B cell (primary cell): ENCODE measurements at regions of chr22 and their contacts with region 1.

Region 1: DNA sequence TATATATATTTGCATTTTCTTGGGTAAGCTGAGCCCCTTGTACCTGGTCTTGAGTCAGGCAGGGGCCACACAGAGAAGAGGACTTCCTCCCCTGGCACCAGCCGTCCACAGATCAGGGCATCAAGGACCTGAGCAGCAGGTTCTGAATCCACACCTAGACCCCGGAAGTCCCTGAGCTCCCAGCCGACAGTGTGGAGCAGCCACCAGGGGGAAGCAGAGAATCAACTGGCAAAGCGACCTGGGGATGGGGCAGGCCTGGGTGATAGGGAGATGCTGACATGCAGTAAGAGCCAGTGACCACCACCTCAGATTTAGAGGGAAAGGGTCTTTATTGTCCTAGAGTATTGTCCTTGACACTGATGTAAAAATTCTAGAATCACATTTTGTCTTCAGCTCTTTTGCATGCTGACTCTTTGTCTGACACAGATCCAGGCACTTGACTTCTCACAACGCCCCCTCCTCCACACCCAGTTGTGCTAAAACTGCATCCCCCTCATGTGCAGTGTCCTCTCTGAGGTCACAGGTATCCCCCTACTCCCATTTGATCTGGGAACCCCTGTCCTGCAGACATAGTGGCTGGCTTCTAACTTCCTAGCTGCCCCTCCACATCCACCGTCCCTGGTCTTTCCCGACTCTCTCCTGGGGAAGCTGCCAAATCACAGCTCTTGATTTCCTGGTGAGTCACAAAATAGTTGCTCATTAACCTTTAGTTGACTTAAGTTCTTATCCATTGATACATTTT is 109.3 kb downstream of the GGTLC2 start:
- DNase-seq: peak; percentile 79
- ATAC-seq: peak; percentile 86
- H3K4me3 ChIP-seq: no peak overlapping the region
- H3K4me3 Mint-ChIP-seq: no peak overlapping the region
- H3K27ac ChIP-seq: peak overlapping the region in 1 of 2 donors; percentile 12
- H3K27ac Mint-ChIP-seq: peak overlapping the region; percentile 72
- H3K4me1 ChIP-seq: peaks cover 14 to 17% of the 10 kb centered on the region in 2 donors
- H3K4me1 Mint-ChIP-seq: peaks cover 27% of the 10 kb centered on the region
- H3K27me3 ChIP-seq: no peaks in the 10 kb centered on the region
- H3K27me3 Mint-ChIP-seq: no peaks in the 10 kb centered on the region
- CTCF ChIP-seq: peak; percentile 74

Region 2: DNA sequence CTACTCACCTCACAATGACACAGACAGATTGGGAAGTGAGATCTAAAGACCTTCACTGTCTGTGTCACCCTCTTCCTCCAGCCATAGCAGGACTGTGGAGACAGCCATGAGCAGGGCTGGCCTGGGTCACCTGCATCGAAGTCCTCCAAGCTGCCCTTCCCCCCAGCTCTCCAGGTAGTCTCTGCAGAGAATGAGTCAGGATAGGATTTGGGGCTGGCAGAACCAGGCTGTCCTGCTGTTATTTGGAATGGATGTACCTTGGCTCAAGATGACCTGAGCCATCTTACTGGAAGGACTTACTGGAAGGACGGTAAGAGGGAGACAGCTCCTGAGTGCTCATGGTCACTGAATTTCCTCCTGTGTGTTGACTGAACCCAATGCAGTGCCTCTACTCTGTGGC is 80.1 kb before region 1 on chr22:
- CTCF ChIA-PET with region 1: no interaction called
- POLR2A ChIA-PET with region 1: no interaction called
- intact Hi-C with region 1: no loop called
- DNase-seq: no peak
- ATAC-seq: no peak
- H3K4me3 ChIP-seq: no peak overlapping the region
- H3K4me3 Mint-ChIP-seq: no peak overlapping the region
- H3K27ac ChIP-seq: no peak overlapping the region
- H3K27ac Mint-ChIP-seq: no peak overlapping the region
- H3K4me1 ChIP-seq: peaks cover under 1 to 2% of the 10 kb centered on the region in 2 donors
- H3K4me1 Mint-ChIP-seq: peaks cover 2% of the 10 kb centered on the region
- H3K27me3 ChIP-seq: no peaks in the 10 kb centered on the region
- H3K27me3 Mint-ChIP-seq: peaks cover 5% of the 10 kb centered on the region
- CTCF ChIP-seq: no peak

Region 3: DNA sequence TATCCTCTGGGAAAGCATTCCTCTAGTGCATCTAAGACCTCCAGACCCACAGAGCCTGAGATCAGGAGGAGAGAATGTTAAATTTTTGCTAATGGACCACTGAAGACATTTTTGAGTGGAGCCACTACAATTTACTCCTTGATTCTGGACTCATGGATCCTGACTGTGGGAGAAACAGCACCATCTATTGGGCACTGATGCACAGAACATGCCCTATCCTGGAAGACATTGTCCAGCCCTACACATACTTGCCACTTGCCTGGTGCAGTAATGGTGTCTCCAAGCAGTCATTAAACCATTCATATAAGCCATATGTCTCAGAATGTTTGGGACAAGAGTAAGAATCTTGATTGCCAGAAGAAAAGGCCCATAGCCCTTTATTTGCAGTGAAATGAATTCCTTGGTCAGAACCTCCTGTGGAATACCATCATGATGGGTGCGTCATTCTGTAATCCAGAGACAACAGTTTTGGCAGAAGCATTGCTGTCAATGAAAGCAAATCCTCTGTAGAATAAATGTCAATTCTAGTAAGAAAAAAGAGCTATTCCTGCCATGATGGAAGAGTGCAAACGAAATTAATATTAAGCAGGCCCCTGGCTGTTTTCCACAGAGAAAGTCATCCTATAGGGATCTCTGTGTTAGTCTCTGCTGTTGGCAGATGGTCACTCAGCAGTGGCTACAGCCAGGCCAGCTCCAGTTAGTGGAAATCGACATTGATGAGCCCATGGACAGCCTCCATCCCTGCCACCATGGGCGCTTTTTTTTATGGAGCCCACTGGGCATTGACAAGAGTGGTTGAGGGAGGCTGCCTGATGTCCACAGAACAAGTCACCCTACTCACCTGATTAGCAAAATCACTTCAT is 65.8 kb before region 1 on chr22:
- CTCF ChIA-PET with region 1: interaction called, 24 read pairs
- POLR2A ChIA-PET with region 1: interaction called, 4 read pairs
- intact Hi-C with region 1: no loop called
- DNase-seq: peak; percentile 36
- ATAC-seq: no peak
- H3K4me3 ChIP-seq: no peak overlapping the region
- H3K4me3 Mint-ChIP-seq: peak overlapping the region; percentile 78
- H3K27ac ChIP-seq: peak overlapping the region; percentile 11 to 52
- H3K27ac Mint-ChIP-seq: peak overlapping the region; percentile 81
- H3K4me1 ChIP-seq: peaks cover 46 to 56% of the 10 kb centered on the region in 2 donors
- H3K4me1 Mint-ChIP-seq: peaks cover 54% of the 10 kb centered on the region
- H3K27me3 ChIP-seq: no peaks in the 10 kb centered on the region
- H3K27me3 Mint-ChIP-seq: no peaks in the 10 kb centered on the region
- CTCF ChIP-seq: peak; percentile 47

Region 4: GRCh38 chr22:22702237-22703202 is 51.2 kb before region 1 on chr22:
- CTCF ChIA-PET with region 1: interaction called, 11 read pairs
- POLR2A ChIA-PET with region 1: no interaction called
- intact Hi-C with region 1: no loop called
- DNase-seq: peak; percentile 36
- ATAC-seq: no peak
- H3K4me3 ChIP-seq: no peak overlapping the region
- H3K4me3 Mint-ChIP-seq: no peak overlapping the region
- H3K27ac ChIP-seq: no peak overlapping the region
- H3K27ac Mint-ChIP-seq: no peak overlapping the region
- H3K4me1 ChIP-seq: peaks cover 11 to 17% of the 10 kb centered on the region in 2 donors
- H3K4me1 Mint-ChIP-seq: peaks cover 21% of the 10 kb centered on the region
- H3K27me3 ChIP-seq: no peaks in the 10 kb centered on the region
- H3K27me3 Mint-ChIP-seq: peaks cover 3% of the 10 kb centered on the region
- CTCF ChIP-seq: peak; percentile 30

Region 5: DNA sequence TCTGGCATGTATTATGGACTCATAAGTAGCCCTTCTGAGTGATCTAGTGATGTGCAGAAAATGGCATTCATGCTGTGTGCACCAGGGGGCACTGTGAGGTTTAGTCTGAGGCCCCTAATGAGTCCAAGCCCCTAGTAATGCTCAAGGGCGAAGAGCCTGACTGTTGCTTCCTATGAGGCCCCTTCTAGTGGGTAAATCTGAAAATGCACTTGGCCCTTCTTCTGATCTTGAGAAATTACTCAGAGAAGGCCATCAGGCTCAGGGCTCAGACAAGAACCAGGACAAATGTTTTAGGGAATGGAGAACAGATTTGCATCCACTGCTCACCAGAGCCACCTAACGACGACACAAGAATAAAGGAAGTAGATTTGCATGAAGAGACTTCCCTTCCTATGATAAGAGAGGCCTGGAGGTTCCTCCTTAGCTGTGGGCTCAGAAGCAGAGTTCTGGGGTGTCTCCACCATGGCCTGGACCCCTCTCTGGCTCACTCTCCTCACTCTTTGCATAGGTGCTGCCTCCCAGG is 33.4 kb before region 1 on chr22:
- CTCF ChIA-PET with region 1: interaction called, 36 read pairs
- POLR2A ChIA-PET with region 1: no interaction called
- intact Hi-C with region 1: no loop called
- DNase-seq: peak; percentile 86
- ATAC-seq: peak; percentile 79
- H3K4me3 ChIP-seq: peak overlapping the region in 4 of 5 experiments; percentile 32 to 47 (median 38)
- H3K4me3 Mint-ChIP-seq: peak overlapping the region; percentile 60
- H3K27ac ChIP-seq: peak overlapping the region; percentile 92 to 96
- H3K27ac Mint-ChIP-seq: peak overlapping the region; percentile 95
- H3K4me1 ChIP-seq: peaks cover 43% of the 10 kb centered on the region in 2 donors
- H3K4me1 Mint-ChIP-seq: peaks cover 52% of the 10 kb centered on the region
- H3K27me3 ChIP-seq: no peaks in the 10 kb centered on the region
- H3K27me3 Mint-ChIP-seq: no peaks in the 10 kb centered on the region
- CTCF ChIP-seq: peak; percentile 78

Region 6: DNA sequence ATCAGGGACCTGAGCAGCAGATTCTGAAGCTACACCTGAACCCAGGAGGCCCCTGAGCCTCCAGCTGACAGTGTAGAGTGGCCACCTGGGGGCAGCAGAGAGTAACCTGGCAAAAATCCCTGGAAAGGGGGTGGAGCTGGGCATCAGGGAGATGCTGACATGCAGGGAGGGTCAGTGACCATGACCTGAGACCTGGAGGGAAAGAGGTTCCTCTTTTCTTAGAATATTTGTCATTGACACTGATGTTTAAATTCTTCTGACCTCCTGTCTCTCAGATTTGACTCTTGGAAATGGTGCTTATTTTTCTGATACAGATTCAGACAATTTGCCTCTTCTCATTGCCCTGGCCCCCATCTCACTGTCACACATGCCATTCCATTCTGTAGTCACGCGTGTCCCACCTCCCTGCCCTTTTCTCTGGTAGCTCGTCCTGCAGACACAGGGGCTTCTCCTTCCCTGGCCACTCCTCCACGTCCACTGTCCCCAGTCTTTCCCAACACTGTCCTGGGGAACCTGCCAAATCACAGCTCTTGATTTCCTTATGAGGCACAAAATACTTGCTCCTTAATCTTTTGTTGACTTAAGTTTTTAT is 16.7 kb after region 1 on chr22:
- CTCF ChIA-PET with region 1: interaction called, 27 read pairs
- POLR2A ChIA-PET with region 1: no interaction called
- intact Hi-C with region 1: no loop called
- DNase-seq: peak; percentile 60
- ATAC-seq: no peak
- H3K4me3 ChIP-seq: no peak overlapping the region
- H3K4me3 Mint-ChIP-seq: no peak overlapping the region
- H3K27ac ChIP-seq: no peak overlapping the region
- H3K27ac Mint-ChIP-seq: peak overlapping the region; percentile 47
- H3K4me1 ChIP-seq: peaks cover 22 to 39% of the 10 kb centered on the region in 2 donors
- H3K4me1 Mint-ChIP-seq: peaks cover 32% of the 10 kb centered on the region
- H3K27me3 ChIP-seq: peaks cover 0 to 10% (median 3%) of the 10 kb centered on the region in 4 experiments
- H3K27me3 Mint-ChIP-seq: peaks cover 28% of the 10 kb centered on the region
- CTCF ChIP-seq: peak; percentile 67

Region 7: GRCh38 chr22:22810018-22810427 is 56.3 kb after region 1 on chr22:
- CTCF ChIA-PET with region 1: interaction called, 11 read pairs
- POLR2A ChIA-PET with region 1: no interaction called
- intact Hi-C with region 1: no loop called
- DNase-seq: peak; percentile 84
- ATAC-seq: peak; percentile 76
- H3K4me3 ChIP-seq: peak overlapping the region in 1 of 5 experiments; percentile 1
- H3K4me3 Mint-ChIP-seq: no peak overlapping the region
- H3K27ac ChIP-seq: no peak overlapping the region
- H3K27ac Mint-ChIP-seq: no peak overlapping the region
- H3K4me1 ChIP-seq: peaks cover 9 to 26% of the 10 kb centered on the region in 2 donors
- H3K4me1 Mint-ChIP-seq: peaks cover 24% of the 10 kb centered on the region
- H3K27me3 ChIP-seq: peaks cover 0 to 9% (median 0%) of the 10 kb centered on the region in 4 experiments
- H3K27me3 Mint-ChIP-seq: peaks cover 12% of the 10 kb centered on the region
- CTCF ChIP-seq: peak; percentile 91

Region 8: DNA sequence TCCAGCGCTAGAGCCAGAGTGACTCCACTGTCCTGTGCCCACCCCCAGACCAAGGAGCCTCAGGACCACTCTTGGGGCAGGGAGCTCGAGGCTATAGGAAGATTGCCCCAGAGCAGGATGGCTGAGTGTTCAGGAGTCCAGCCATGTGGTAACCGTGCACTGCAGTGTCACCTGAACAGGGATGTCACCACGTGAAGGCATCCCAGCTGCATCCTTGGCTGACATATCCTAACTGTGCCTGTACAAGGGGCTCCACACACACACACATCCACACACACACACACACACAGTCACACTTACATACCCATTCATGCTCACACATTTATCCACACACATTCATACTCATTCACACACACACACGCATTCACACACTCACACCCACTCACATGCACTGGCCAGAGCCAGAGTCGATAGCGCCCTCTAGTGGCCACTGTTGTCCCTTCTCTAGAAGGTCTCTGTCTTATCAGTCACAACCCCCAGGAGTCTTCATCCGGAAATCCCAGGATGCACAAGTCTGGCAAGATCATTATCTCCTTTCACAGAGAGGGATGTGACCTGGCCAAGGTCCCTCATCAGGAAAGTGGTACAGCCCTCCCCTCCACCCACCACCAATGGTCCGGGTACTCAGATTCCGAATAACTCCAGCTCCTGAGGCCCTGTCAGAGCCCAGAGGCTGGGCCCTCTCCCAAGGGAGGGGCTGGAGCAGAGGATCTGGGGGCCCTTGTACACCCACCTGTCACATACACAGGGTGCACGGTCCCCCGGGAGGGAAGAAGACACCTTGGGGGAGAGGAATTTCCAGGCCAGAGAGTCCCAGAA is 189.0 kb after region 1 on chr22:
- CTCF ChIA-PET with region 1: interaction called, 15 read pairs
- POLR2A ChIA-PET with region 1: interaction called, 4 read pairs
- intact Hi-C with region 1: no loop called
- DNase-seq: peak; percentile 89
- ATAC-seq: peak; percentile 66
- H3K4me3 ChIP-seq: peak overlapping the region in 1 of 5 experiments; percentile 5
- H3K4me3 Mint-ChIP-seq: peak overlapping the region; percentile 51
- H3K27ac ChIP-seq: peak overlapping the region; percentile 66 to 79
- H3K27ac Mint-ChIP-seq: peak overlapping the region; percentile 83
- H3K4me1 ChIP-seq: peaks cover 92 to 96% of the 10 kb centered on the region in 2 donors
- H3K4me1 Mint-ChIP-seq: peaks cover 86% of the 10 kb centered on the region
- H3K27me3 ChIP-seq: no peaks in the 10 kb centered on the region
- H3K27me3 Mint-ChIP-seq: no peaks in the 10 kb centered on the region
- CTCF ChIP-seq: peak; percentile 83

Region 9: GRCh38 chr22:22976033-22976922 is 222.6 kb after region 1 on chr22:
- CTCF ChIA-PET with region 1: no interaction called
- POLR2A ChIA-PET with region 1: no interaction called
- intact Hi-C with region 1: no loop called
- DNase-seq: no peak
- ATAC-seq: no peak
- H3K4me3 ChIP-seq: no peak overlapping the region
- H3K4me3 Mint-ChIP-seq: no peak overlapping the region
- H3K27ac ChIP-seq: no peak overlapping the region
- H3K27ac Mint-ChIP-seq: no peak overlapping the region
- H3K4me1 ChIP-seq: no peaks in the 10 kb centered on the region
- H3K4me1 Mint-ChIP-seq: no peaks in the 10 kb centered on the region
- H3K27me3 ChIP-seq: no peaks in the 10 kb centered on the region
- H3K27me3 Mint-ChIP-seq: peaks cover 23% of the 10 kb centered on the region
- CTCF ChIP-seq: no peak